Activated CD4-positive, alpha-beta T cell treated with anti-CD3 and anti-CD28 coated beads for 36 hours (primary cell): ENCODE measurements at regions of chr1 and their contacts with region 1.

Region 1: DNA sequence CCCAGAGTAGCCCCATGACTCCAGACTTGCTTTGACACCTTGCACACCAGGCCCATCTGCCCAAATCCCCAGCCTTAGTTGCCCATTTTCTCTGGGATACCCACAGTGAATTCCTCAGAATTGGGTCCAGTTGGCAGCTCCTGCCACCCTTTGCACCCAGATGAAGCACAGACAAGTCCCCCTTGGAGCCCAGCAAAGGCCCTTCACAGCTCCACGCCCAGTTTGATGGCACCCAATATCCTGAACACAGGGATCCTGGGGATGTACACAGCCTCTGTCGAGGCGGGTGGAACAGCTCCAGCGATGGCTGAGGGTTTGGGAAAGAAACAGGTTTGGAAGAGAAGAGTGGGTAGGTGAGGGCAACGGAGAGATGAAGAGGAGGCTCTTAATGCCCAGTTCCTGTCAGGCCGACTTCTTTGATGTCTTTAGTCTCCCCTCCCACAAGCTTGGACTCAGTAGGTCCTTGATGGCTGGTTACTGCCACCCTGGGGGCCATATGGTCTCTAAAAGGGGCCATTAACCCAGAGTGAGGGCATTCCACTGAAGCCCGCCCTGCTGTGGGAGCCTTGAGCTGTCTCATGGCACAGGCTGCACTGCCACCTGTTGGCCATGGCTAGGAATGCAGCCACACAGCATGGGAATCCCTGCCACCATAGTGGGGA is 21.7 kb downstream of the TMEM53 start:
- DNase-seq: peak; percentile 86
- ATAC-seq: peak; percentile 94
- H3K4me3 Mint-ChIP-seq: no peak overlapping the region
- H3K27ac Mint-ChIP-seq: no peak overlapping the region
- H3K4me1 Mint-ChIP-seq: no peaks in the 10 kb centered on the region
- H3K27me3 Mint-ChIP-seq: no peaks in the 10 kb centered on the region

Region 2: DNA sequence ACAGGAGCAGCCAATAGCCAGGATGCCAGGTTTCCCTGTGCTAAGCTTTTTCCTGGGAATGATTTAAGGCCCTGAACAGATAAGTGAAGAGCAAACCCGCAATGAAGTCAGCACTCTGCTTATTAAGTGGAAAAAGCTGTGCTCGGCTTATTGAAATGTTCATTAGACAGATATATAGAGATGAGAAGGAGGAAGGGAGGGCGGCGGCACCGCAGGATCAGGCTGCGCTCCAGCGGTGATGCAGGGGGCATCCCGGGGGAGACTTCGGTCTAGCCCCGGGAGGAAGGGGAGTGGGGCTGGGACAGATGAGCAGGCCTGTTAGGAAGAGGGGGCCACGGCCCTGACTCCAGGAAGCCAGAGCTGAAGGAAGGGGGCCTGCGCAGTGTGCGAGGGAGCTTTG is 93.2 kb before region 1 on chr1:
- CTCF ChIA-PET with region 1: no interaction called
- POLR2A ChIA-PET with region 1: no interaction called
- intact Hi-C with region 1: no loop called
- DNase-seq: no peak
- ATAC-seq: no peak
- H3K4me3 Mint-ChIP-seq: no peak overlapping the region
- H3K27ac Mint-ChIP-seq: no peak overlapping the region
- H3K4me1 Mint-ChIP-seq: no peaks in the 10 kb centered on the region
- H3K27me3 Mint-ChIP-seq: peaks cover 1% of the 10 kb centered on the region

Region 3: GRCh38 chr1:44571712-44572571 is 80.6 kb before region 1 on chr1:
- CTCF ChIA-PET with region 1: interaction called, 40 read pairs
- POLR2A ChIA-PET with region 1: no interaction called
- intact Hi-C with region 1: loop called (anchors 1 kb)
- DNase-seq: peak; percentile 20
- ATAC-seq: peak; percentile 80
- H3K4me3 Mint-ChIP-seq: no peak overlapping the region
- H3K27ac Mint-ChIP-seq: no peak overlapping the region
- H3K4me1 Mint-ChIP-seq: no peaks in the 10 kb centered on the region
- H3K27me3 Mint-ChIP-seq: peaks cover 5% of the 10 kb centered on the region

Region 4: GRCh38 chr1:44631647-44632539 is 20.7 kb before region 1 on chr1:
- CTCF ChIA-PET with region 1: interaction called, 91 read pairs
- POLR2A ChIA-PET with region 1: interaction called, 10 read pairs
- intact Hi-C with region 1: no loop called
- DNase-seq: peak; percentile 95
- ATAC-seq: peak; percentile 81
- H3K4me3 Mint-ChIP-seq: peak overlapping the region; percentile 86
- H3K27ac Mint-ChIP-seq: peak overlapping the region; percentile 97
- H3K4me1 Mint-ChIP-seq: peaks cover 40% of the 10 kb centered on the region
- H3K27me3 Mint-ChIP-seq: no peaks in the 10 kb centered on the region

Region 5: GRCh38 chr1:44674113-44675000 is 21.8 kb after region 1 on chr1 and contains the starts of genes ARMH1 and TMEM53:
- CTCF ChIA-PET with region 1: interaction called, 16 read pairs
- POLR2A ChIA-PET with region 1: interaction called, 3 read pairs
- intact Hi-C with region 1: no loop called
- DNase-seq: peak; percentile 99
- ATAC-seq: peak; percentile 97
- H3K4me3 Mint-ChIP-seq: peak within 1 kb of the TSS; percentile 78
- H3K27ac Mint-ChIP-seq: peak within 1 kb of the TSS; percentile 84
- H3K4me1 Mint-ChIP-seq: peaks cover 24% of the 10 kb centered on the region
- H3K27me3 Mint-ChIP-seq: no peaks in the 10 kb centered on the region
- total RNA-seq, gene ARMH1: 67.3 to 75.1 TPM
- total RNA-seq, gene TMEM53: 4.3 to 5.5 TPM